A549 (cell line): ENCODE measurements at regions of chr17 and their contacts with region 1.

Region 1: DNA sequence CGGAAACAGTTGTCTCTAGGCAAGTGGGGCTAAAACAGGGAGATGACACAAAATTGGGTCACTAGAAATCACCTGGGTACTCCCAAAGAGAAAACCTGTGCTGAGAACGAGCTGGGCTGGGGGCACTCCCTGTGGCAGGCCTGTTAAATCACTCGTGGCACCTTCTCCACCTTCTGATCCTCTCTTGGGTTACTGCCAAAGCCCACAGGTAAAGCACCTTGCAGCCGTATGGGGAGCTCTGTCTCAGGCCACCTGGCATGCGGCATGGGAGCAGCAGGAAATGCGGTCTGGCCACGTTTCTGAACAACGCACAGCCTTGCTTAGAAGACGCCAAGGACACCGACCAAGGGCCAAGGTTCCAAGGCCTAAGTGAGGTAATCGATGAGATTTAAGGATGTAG is 21.5 kb upstream of the ICAM2 start:
- DNase-seq: no peak
- ATAC-seq: no peak
- H3K4me3 ChIP-seq: no peak overlapping the region
- H3K27ac ChIP-seq: no peak overlapping the region
- H3K4me1 ChIP-seq: no peaks in the 10 kb centered on the region
- CTCF ChIP-seq: no peak
- EP300 ChIP-seq: no peak
- POLR2A ChIP-seq: no peak
- RAD21 ChIP-seq: no peak

Region 2: GRCh38 chr17:64056269-64057005 is 14.5 kb after region 1 on chr17:
- CTCF ChIA-PET with region 1: interaction called, 18 read pairs
- POLR2A ChIA-PET with region 1: no interaction called
- DNase-seq: no peak
- ATAC-seq: peak in 1 of 2 experiments; percentile 28; a peak in 3 of 6 replicates
- H3K4me3 ChIP-seq: no peak overlapping the region
- H3K27ac ChIP-seq: peak overlapping the region in 1 of 2 experiments; percentile 11; a peak in 1 of 6 replicates
- H3K4me1 ChIP-seq: peaks cover 29% of the 10 kb centered on the region
- CTCF ChIP-seq: no peak
- EP300 ChIP-seq: no peak
- POLR2A ChIP-seq: no peak
- RAD21 ChIP-seq: no peak